K562 (cell line): ENCODE measurements at regions of chr3 and their contacts with region 1.

Region 1: DNA sequence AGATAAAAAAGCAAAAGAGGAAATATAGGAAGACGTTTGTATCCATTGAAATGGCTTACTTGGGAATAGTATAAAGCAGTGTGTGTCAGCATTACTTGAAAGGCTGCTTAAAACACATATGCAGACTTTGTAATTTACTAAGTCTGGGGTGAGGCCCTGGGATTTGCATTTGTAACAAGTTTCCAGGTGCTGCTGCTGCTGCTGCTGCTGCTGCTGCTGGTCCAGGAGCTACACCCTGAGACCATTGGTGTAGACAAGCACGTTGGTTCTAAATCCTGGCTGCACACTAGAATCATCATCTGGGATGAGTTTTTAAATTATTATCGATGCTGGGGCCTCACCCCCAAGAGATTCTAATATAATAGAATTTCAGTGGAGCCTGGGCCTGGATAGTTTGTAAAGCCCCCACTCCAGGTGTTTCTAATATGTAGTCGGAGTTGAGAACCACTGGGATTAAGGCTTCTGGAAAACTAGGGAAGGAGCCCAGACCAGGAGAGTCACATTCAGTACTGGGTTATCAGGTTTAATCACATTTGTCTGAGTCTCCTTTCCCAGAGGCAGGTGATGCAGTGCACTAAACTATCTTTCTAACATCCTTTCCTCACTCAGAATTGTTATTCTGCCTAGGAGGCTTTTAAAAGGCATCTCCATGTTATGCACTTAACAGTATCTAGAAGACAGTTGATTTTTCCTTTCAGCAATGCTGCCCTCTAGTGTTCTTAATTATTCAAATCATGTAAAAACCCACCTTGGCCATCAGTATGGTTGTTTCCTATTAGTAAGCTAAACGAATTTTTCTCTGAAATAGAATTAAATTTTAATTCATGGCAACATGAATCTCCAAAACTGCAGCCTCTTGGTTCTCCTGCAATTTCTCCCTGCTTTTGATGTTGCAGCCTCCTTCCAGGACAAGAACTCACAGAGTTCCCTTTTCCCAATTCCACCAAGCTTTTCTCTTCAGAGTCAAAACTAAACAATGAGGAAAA is 45.4 kb downstream of the SSR3 start:
- DNase-seq: peak; percentile 57 to 63 (median 60)
- ATAC-seq: peak; percentile 90
- H3K4me3 ChIP-seq: no peak overlapping the region
- H3K27ac ChIP-seq: no peak overlapping the region
- H3K4me1 ChIP-seq: peaks cover 0 to 2% of the 10 kb centered on the region in 2 experiments; a peak in 1 of 5 replicates
- H3K27me3 ChIP-seq: no peaks in the 10 kb centered on the region; a peak in 1 of 5 replicates
- CTCF ChIP-seq: peak; percentile 60 to 75 (median 62); a peak in 4 of 6 replicates
- EP300 ChIP-seq: no peak
- POLR2A ChIP-seq: no peak
- RAD21 ChIP-seq: peak; percentile 79 to 92

Region 2: GRCh38 chr3:155995525-155996351 is 513.7 kb before region 1 on chr3:
- CTCF ChIA-PET with region 1: interaction called, 3 read pairs
- POLR2A ChIA-PET with region 1: no interaction called
- in situ Hi-C with region 1: no loop called
- intact Hi-C with region 1: loop called (anchors 5 kb)
- DNase-seq: peak; percentile 22 to 61 (median 42)
- ATAC-seq: peak; percentile 95
- H3K4me3 ChIP-seq: no peak overlapping the region
- H3K27ac ChIP-seq: no peak overlapping the region
- H3K4me1 ChIP-seq: no peaks in the 10 kb centered on the region
- H3K27me3 ChIP-seq: peaks cover 7 to 13% of the 10 kb centered on the region in 2 experiments; a peak in 3 of 5 replicates
- CTCF ChIP-seq: peak; percentile 44 to 82 (median 69); a peak in 5 of 6 replicates
- EP300 ChIP-seq: no peak
- POLR2A ChIP-seq: no peak
- RAD21 ChIP-seq: peak; percentile 71 to 83

Region 3: DNA sequence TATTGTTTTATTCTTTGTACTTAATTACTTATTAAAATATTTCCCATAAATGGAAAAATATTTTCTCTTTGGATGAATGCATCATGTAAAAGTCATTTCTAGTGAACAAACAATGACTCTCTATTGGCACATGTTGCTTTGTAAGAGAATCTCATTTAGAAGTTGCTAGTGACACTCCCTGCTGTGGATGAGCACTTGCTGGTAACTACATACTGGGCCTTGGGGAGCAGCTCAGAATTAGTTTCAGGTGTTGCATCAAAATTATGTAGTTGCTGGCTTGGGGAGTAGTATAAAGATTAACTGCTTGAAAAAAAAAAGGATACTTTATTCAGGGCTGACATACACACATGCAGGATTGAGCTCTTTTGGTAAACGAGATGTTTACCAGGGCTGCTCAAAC is 469.4 kb before region 1 on chr3:
- CTCF ChIA-PET with region 1: no interaction called
- POLR2A ChIA-PET with region 1: no interaction called
- in situ Hi-C with region 1: no loop called
- intact Hi-C with region 1: loop called (anchors 10 kb)
- DNase-seq: no peak
- ATAC-seq: no peak
- H3K4me3 ChIP-seq: no peak overlapping the region
- H3K27ac ChIP-seq: no peak overlapping the region
- H3K4me1 ChIP-seq: peaks cover 0 to 9% of the 10 kb centered on the region in 2 experiments; a peak in 1 of 5 replicates
- H3K27me3 ChIP-seq: peaks cover under 1 to 16% of the 10 kb centered on the region in 2 experiments; a peak in 4 of 5 replicates
- CTCF ChIP-seq: no peak
- EP300 ChIP-seq: no peak
- POLR2A ChIP-seq: no peak
- RAD21 ChIP-seq: no peak

Region 4: DNA sequence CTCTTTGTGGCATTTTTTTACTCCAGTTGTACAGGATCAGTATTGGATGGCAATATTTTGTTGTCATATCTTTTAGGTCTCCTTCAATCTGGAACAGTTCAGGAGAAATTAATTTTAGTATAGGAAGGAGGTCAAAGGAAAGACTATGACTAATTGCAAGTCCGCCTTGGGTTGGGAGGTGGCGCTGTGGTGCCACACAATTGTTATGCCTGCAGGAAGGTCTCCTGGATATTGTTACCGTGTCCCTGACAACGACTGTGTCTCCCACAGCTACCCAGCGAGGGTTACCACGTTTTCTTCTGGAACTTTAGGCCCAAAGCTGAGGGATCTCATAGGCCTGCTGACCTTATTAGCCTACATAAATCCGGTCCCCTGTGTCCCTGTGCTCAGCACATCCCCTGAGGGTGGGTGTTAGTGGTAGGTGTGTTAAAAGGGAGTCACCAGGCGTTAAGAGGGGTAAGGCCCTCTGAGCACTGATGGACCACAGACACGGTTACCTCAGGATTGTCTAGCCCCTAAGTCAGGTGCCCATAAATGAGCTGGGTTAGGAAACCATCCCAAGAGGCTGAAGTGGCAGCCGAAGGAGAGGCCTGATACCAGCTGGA is 357.6 kb before region 1 on chr3:
- CTCF ChIA-PET with region 1: interaction called, 9 read pairs
- POLR2A ChIA-PET with region 1: no interaction called
- in situ Hi-C with region 1: loop called (anchors 25 kb)
- intact Hi-C with region 1: loop called (anchors 1 kb)
- DNase-seq: peak; percentile 35 to 69 (median 49)
- ATAC-seq: peak; percentile 91
- H3K4me3 ChIP-seq: no peak overlapping the region
- H3K27ac ChIP-seq: no peak overlapping the region
- H3K4me1 ChIP-seq: peaks cover 0 to 7% of the 10 kb centered on the region in 2 experiments; a peak in 2 of 5 replicates
- H3K27me3 ChIP-seq: peaks cover 2 to 4% of the 10 kb centered on the region in 2 experiments; a peak in 2 of 5 replicates
- CTCF ChIP-seq: peak; percentile 79 to 92 (median 91)
- EP300 ChIP-seq: no peak
- POLR2A ChIP-seq: no peak
- RAD21 ChIP-seq: peak; percentile 67 to 85

Region 5: DNA sequence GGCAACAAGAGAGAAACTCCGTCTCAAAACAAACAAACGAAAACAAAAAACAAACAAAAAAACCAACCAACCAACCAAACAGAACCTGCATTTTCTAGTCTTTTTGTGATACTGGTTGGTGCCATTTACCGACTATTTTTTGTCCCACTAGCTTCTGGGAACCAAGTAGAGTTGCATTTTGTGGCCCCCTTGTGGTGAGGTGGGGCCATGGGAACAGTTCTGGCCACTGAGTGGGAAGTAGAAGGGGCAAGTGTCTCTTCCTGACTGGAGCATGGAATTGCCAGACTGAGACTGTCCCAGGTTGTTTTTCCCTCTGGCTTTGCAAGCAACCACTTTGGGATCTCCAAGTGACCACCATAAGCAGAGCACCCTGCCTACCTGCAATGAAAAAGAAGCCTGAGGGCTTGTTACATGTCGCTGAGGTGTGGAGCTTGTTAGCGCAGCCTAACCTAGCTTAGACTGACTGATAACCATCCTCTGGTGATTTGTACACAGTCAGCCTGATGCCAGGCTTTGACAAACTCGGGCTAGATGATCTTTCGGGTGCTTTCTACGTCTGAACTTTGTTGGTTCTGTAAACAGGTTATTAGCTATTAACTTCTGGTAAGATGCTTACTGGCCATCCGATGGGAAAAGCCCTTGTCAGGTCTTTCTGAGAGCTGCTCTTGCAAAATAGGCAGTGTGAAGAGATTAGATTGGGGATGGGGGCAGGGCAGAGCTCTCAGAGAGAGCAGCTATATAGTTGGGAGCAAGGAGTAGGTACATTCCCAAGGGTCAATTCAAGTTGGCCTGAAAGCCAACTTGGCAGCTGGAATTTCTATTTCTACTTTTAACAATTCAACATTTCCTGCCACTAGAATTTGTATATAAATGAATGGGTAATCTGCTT is 126.8 kb before region 1 on chr3:
- CTCF ChIA-PET with region 1: no interaction called
- POLR2A ChIA-PET with region 1: no interaction called
- in situ Hi-C with region 1: no loop called
- intact Hi-C with region 1: loop called (anchors 10 kb)
- DNase-seq: peak; percentile 52 to 61 (median 60)
- ATAC-seq: peak; percentile 96
- H3K4me3 ChIP-seq: no peak overlapping the region
- H3K27ac ChIP-seq: no peak overlapping the region
- H3K4me1 ChIP-seq: no peaks in the 10 kb centered on the region
- H3K27me3 ChIP-seq: peaks cover 3 to 24% of the 10 kb centered on the region in 2 experiments; a peak in 4 of 5 replicates
- CTCF ChIP-seq: peak; percentile 74 to 82 (median 77)
- EP300 ChIP-seq: no peak
- POLR2A ChIP-seq: no peak
- RAD21 ChIP-seq: peak; percentile 55 to 78

Region 6: DNA sequence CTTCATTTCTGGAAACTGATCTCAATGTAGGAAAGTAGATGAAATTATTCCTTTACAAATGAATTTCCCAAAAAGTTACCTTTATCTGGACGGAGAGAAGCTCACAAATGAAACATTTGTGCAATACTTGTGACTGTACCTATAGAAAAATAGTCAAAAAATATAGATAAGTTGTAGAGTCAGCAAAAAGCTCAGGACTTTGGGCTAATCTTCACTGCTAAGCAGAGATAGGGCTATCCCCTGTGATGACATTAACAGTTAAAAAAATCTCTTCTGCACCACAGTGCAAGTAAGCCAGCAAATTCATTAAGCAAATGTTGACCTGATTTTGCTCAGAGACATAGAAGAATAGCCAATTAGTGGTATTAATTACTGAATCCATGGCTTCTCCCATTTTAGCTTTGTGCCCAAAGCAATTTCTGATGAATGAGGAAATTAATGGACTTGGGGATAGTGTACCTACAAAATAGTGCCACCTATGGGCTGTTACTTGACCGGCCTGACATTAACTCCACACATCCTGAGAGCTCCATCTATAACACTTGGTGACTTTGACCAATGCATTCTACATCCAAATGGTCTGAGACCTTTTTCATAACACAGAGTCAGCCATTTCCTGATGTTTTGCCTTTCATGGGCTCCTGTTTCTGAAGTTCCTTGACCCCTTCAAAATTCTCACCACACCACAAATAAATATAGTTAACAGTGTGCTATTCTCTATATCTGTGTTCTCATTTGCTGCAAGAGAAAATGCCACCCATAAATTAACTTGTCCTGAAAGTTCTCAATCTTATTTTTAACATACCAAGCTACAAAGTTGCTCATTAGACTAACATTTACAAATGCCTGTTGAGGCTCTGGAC is 59.5 kb before region 1 on chr3:
- CTCF ChIA-PET with region 1: interaction called, 5 read pairs
- POLR2A ChIA-PET with region 1: no interaction called
- in situ Hi-C with region 1: no loop called
- intact Hi-C with region 1: loop called (anchors 1 kb)
- DNase-seq: peak; percentile 40 to 49 (median 44)
- ATAC-seq: peak; percentile 90
- H3K4me3 ChIP-seq: no peak overlapping the region
- H3K27ac ChIP-seq: no peak overlapping the region
- H3K4me1 ChIP-seq: peaks cover 0 to 2% of the 10 kb centered on the region in 2 experiments; a peak in 1 of 5 replicates
- H3K27me3 ChIP-seq: no peaks in the 10 kb centered on the region
- CTCF ChIP-seq: peak; percentile 57 to 67 (median 66)
- EP300 ChIP-seq: no peak
- POLR2A ChIP-seq: no peak
- RAD21 ChIP-seq: peak; percentile 22 to 48; a peak in 3 of 4 replicates

Region 7: GRCh38 chr3:156474560-156475389 is 34.7 kb before region 1 on chr3:
- CTCF ChIA-PET with region 1: interaction called, 5 read pairs
- POLR2A ChIA-PET with region 1: no interaction called
- in situ Hi-C with region 1: no loop called
- intact Hi-C with region 1: loop called (anchors 1 kb)
- DNase-seq: peak in 3 of 4 experiments; percentile 23 to 62 (median 54)
- ATAC-seq: peak; percentile 91
- H3K4me3 ChIP-seq: peak overlapping the region; percentile 17
- H3K27ac ChIP-seq: peak overlapping the region; percentile 31; the same call in 1 of the 3 replicates
- H3K4me1 ChIP-seq: peaks cover 0 to 2% of the 10 kb centered on the region in 2 experiments; a peak in 3 of 5 replicates
- H3K27me3 ChIP-seq: no peaks in the 10 kb centered on the region
- CTCF ChIP-seq: peak; percentile 72 to 78 (median 73)
- EP300 ChIP-seq: no peak
- POLR2A ChIP-seq: no peak
- RAD21 ChIP-seq: peak; percentile 51